ENCODE measurements at regions of chr21 and their contacts with region 1.

Region 1: DNA sequence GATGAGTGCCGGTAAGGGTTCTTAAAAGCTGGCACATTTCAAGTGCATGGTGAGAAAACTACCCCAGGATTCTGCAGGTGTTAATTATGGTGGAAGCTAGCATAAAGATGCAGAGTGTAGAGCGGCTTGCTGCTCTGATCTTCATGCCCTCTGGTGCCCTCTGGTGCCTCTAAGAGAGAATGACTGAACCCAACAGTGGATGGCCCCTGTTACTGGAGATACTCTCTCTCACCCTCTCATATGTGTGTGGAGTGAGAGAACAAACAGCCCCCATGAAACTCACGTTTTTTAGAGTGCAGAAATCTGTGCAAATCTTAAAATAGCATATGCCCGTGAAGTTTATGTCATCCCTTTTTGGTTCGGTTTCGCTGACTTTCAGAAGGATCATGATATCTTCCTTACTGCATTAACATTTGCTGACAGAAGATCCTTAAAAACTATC is 90.0 kb downstream of the GRIK1 start:
- DNase-seq: peak; percentile 62 to 88 (median 69)
- ATAC-seq: peak; percentile 100
- H3K4me3 ChIP-seq: no peak overlapping the region
- H3K27ac ChIP-seq: no peak overlapping the region
- H3K4me1 ChIP-seq: peaks cover 0 to 3% of the 10 kb centered on the region in 2 experiments; a peak in 2 of 5 replicates
- H3K27me3 ChIP-seq: no peaks in the 10 kb centered on the region
- CTCF ChIP-seq: peak; percentile 85 to 91 (median 87)
- EP300 ChIP-seq: no peak; the same call in 1 of the 2 replicates
- POLR2A ChIP-seq: no peak
- RAD21 ChIP-seq: peak; percentile 97

Region 2: GRCh38 chr21:29091032-29091431 is 758.7 kb before region 1 on chr21:
- CTCF ChIA-PET with region 1: no interaction called
- POLR2A ChIA-PET with region 1: no interaction called
- in situ Hi-C with region 1: no loop called
- intact Hi-C with region 1: loop called (anchors 10 kb)
- DNase-seq: no peak
- ATAC-seq: no peak
- H3K4me3 ChIP-seq: no peak overlapping the region
- H3K27ac ChIP-seq: no peak overlapping the region
- H3K4me1 ChIP-seq: no peaks in the 10 kb centered on the region
- H3K27me3 ChIP-seq: peaks cover 5 to 6% of the 10 kb centered on the region in 2 experiments; a peak in 3 of 5 replicates
- CTCF ChIP-seq: no peak
- EP300 ChIP-seq: no peak
- POLR2A ChIP-seq: no peak
- RAD21 ChIP-seq: no peak

Region 3: GRCh38 chr21:29232601-29233546 is 616.9 kb before region 1 on chr21:
- CTCF ChIA-PET with region 1: no interaction called
- POLR2A ChIA-PET with region 1: no interaction called
- in situ Hi-C with region 1: no loop called
- intact Hi-C with region 1: loop called (anchors 10 kb)
- DNase-seq: peak in 2 of 4 experiments; percentile 18 to 38
- ATAC-seq: peak; percentile 72
- H3K4me3 ChIP-seq: no peak overlapping the region
- H3K27ac ChIP-seq: no peak overlapping the region
- H3K4me1 ChIP-seq: peaks cover 0 to 9% of the 10 kb centered on the region in 2 experiments; a peak in 3 of 5 replicates
- H3K27me3 ChIP-seq: peaks cover 14 to 19% of the 10 kb centered on the region in 2 experiments
- CTCF ChIP-seq: peak; percentile 15 to 53 (median 22); a peak in 3 of 6 replicates
- EP300 ChIP-seq: peak; percentile 67; the same call in 1 of the 2 replicates
- POLR2A ChIP-seq: no peak
- RAD21 ChIP-seq: peak; percentile 56 to 58

Region 4: DNA sequence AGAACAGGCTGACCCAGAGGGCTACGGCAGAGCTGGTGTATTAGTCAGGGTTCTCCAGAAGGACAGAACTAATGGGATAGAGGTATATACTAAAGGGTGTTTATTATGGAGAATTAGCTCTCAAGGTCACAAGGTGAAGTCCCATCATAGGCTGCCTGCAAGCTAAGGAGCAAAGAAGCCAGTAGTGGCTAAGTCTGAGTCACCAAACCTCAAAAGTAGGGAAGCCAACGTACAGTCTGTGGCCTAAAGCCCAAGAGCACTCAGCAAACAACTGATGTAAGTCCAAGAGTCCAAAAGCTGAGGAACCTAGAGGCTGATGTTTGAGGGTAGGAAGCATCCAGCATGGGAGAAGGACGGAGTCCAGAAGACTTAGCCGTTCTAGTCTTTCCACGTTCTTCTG is 371.8 kb before region 1 on chr21:
- CTCF ChIA-PET with region 1: interaction called, 4 read pairs
- POLR2A ChIA-PET with region 1: interaction called, 3 read pairs
- in situ Hi-C with region 1: loop called (anchors 5 kb)
- intact Hi-C with region 1: loop called (anchors 1 kb)
- DNase-seq: peak in 1 of 4 experiments; percentile 28
- ATAC-seq: no peak
- H3K4me3 ChIP-seq: no peak overlapping the region
- H3K27ac ChIP-seq: no peak overlapping the region
- H3K4me1 ChIP-seq: peaks cover 0 to 8% of the 10 kb centered on the region in 2 experiments; a peak in 3 of 5 replicates
- H3K27me3 ChIP-seq: no peaks in the 10 kb centered on the region
- CTCF ChIP-seq: no peak
- EP300 ChIP-seq: no peak
- POLR2A ChIP-seq: no peak
- RAD21 ChIP-seq: no peak

Region 5: DNA sequence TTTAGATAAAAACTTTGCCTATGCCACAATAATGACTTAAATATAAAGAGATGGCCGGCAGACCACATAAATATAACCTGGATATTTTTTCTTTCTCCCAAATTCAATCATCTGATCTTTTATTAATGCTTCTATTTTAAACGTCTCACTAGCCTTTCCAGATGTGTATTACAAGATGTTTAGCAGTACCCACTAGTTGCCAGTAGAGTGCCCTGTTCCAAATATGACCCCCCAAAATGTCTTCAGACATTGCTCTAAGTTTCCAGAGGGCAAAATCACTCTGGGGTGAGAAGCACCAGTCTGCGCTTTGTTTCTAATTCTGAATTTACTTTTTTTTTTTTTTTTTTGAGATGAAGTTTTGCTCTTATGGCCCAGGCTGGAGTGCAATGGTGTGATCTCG is 178.0 kb before region 1 on chr21:
- CTCF ChIA-PET with region 1: no interaction called
- POLR2A ChIA-PET with region 1: no interaction called
- in situ Hi-C with region 1: no loop called
- intact Hi-C with region 1: loop called (anchors 1 kb)
- DNase-seq: peak in 2 of 4 experiments; percentile 47 to 48
- ATAC-seq: peak; percentile 82
- H3K4me3 ChIP-seq: no peak overlapping the region
- H3K27ac ChIP-seq: no peak overlapping the region
- H3K4me1 ChIP-seq: peaks cover 0 to 13% of the 10 kb centered on the region in 2 experiments; a peak in 3 of 5 replicates
- H3K27me3 ChIP-seq: no peaks in the 10 kb centered on the region
- CTCF ChIP-seq: peak; percentile 49 to 54 (median 53)
- EP300 ChIP-seq: no peak
- POLR2A ChIP-seq: no peak
- RAD21 ChIP-seq: peak in 1 of 2 experiments; percentile 41; a peak in 1 of 4 replicates